ENCODE measurements at regions of chr12 and their contacts with region 1.

Region 1: DNA sequence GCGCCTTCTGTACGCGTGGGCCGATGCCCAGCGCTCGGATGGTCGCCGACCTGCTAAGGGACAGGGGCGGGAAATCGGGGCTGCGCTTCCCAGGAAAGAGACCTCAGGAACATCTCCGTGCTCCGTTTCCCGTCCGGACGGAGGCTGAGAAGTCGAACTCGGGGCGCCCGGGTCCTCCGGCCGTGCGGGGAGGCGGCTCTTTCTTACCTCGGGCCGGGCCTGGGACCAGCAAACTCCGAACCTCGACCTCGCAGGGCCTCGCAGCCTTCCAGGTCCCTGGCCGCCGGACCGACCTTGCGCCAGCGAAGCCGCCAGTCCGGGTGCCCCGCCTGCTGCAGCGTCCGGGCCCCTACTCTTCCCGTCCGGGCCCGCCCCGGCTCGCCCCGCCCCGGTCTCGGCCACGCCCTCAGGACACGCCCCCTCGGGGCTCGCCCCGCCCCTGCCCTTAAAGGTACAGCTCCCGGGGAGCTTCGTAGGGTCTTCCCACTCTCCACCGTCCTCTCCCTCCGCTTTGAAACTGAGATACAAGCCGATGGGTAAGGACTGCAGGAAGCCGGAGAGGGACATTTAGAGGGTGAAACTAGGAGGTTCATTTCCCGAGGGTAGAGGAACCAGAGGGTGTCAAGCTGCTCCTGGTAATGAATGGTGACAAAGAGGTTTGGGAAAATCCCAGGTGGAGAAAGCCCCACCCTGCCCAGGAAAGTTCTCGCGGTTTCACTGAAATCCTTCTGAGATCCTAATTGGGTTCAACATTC is at the start of gene SLC8B1:
- DNase-seq: peak; percentile 92
- ATAC-seq: peak; percentile 98
- H3K4me3 Mint-ChIP-seq: peak within 1 kb of the TSS; percentile 89
- H3K27ac Mint-ChIP-seq: peak within 1 kb of the TSS; percentile 76
- H3K4me1 Mint-ChIP-seq: peaks cover 17% of the 10 kb centered on the region
- H3K27me3 Mint-ChIP-seq: no peaks in the 10 kb centered on the region
- total RNA-seq, gene SLC8B1: 17.9 to 19.4 TPM

Region 2: GRCh38 chr12:112985642-112986290 is 349.2 kb before region 1 on chr12:
- CTCF ChIA-PET with region 1: no interaction called
- POLR2A ChIA-PET with region 1: no interaction called
- intact Hi-C with region 1: loop called in 1 of 2 experiments (anchors 2 kb)
- DNase-seq: no peak
- ATAC-seq: no peak
- H3K4me3 Mint-ChIP-seq: no peak overlapping the region
- H3K27ac Mint-ChIP-seq: peak overlapping the region; percentile 52
- H3K4me1 Mint-ChIP-seq: peaks cover 80% of the 10 kb centered on the region
- H3K27me3 Mint-ChIP-seq: no peaks in the 10 kb centered on the region

Region 3: DNA sequence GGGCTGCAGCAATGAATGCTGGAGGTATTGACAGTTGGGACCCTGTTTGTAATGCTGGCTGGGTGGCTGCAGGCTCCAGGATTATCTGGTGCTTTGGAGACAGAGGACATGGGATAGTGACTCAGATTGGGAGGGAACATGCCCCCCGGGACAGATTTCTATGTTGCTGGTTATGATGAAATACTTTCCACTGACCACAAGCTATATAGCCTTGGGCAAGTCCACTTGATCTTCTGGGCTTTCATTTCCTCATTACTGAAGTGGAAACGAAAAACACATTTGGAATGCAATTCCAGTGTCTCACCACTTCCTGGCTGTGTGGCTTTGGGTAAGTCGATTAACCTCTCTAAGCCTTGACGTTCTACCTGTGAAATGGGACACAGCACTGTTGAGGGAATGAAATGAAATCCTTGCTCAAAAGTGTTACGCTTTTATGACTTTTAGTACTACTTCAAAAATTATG is 120.0 kb before region 1 on chr12:
- CTCF ChIA-PET with region 1: no interaction called
- POLR2A ChIA-PET with region 1: no interaction called
- intact Hi-C with region 1: no loop called
- DNase-seq: no peak
- ATAC-seq: peak; percentile 55
- H3K4me3 Mint-ChIP-seq: no peak overlapping the region
- H3K27ac Mint-ChIP-seq: no peak overlapping the region
- H3K4me1 Mint-ChIP-seq: peaks cover 37% of the 10 kb centered on the region
- H3K27me3 Mint-ChIP-seq: no peaks in the 10 kb centered on the region

Region 4: DNA sequence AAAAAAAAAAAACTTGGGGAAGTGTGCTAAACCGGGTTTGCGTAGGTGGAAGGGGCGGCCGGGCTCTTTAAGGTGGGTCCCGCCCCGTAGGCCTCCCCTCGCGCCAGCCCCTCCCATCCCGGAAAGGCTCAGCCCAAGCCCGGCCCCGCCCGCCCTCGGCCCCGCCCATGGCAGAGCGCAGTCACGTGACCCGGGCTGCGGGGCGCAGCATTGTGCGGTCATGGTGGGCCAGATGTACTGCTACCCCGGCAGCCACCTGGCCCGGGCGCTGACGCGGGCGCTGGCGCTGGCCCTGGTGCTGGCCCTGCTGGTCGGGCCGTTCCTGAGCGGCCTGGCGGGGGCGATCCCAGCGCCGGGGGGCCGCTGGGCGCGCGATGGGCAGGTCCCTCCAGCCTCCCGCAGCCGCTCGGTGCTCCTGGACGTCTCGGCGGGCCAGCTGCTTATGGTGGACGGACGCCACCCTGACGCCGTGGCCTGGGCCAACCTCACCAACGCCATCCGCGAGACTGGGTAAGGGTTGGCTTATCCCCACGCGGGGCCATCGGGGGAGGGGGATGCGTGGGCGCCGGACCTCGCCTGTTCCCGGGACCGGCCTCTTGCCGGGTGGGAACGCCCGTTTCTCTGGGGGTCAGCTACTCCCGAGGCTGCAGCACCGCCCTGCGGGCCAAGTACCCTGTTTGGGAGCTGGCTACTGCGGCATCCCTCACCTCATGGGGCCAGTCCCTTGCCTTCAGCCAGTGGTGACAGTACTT is 23.6 kb after region 1 on chr12 and contains the start of gene PLBD2:
- CTCF ChIA-PET with region 1: interaction called, 4 read pairs
- POLR2A ChIA-PET with region 1: no interaction called
- intact Hi-C with region 1: loop called (anchors 1 kb)
- DNase-seq: peak; percentile 98
- ATAC-seq: peak; percentile 98
- H3K4me3 Mint-ChIP-seq: peak within 1 kb of the TSS; percentile 84
- H3K27ac Mint-ChIP-seq: peak within 1 kb of the TSS; percentile 86
- H3K4me1 Mint-ChIP-seq: peaks cover 22% of the 10 kb centered on the region
- H3K27me3 Mint-ChIP-seq: no peaks in the 10 kb centered on the region
- total RNA-seq, gene PLBD2: 13.7 to 17.3 TPM

Measured in activated CD4-positive, alpha-beta T cell treated with anti-CD3 and anti-CD28 coated beads for 36 hours (primary cell).